GM12878 (cell line): ENCODE measurements at regions of chr7 and their contacts with region 1.

Region 1: DNA sequence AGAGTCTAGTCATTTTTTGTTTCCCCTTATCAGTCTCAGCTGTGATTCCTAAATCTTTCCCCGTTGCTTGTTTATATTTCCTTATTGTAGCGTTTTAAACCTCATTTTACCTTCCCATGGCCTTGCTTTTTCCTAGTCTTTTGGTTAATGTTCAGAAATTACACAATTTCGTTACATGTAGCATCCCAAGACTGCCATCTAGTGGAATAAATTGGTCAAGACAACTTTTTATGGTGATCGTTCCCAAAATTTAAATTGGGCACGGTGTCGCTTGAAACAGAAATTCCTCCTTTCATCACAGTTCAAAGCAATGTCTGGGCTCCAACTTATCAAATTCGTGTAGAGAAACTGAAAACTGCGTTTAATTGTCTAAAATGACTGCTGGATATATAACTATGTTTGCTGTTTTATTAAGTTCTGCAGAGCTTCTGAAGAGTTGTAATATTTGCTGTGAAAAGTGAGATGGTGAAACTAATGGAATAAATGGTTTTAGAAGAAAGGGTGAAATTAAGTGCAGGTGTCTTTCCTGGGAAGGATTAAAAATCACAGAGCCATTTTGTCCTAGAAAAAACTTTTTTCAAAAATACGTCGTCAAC is 370.2 kb downstream of the PHF14 start:
- DNase-seq: no peak
- ATAC-seq: 0 out of 3 replicates have a peak, but pooled peaks have one; percentile 38
- H3K4me3 ChIP-seq: no peak overlapping the region
- H3K27ac ChIP-seq: no peak overlapping the region
- H3K4me1 ChIP-seq: no peaks in the 10 kb centered on the region
- H3K27me3 ChIP-seq: no peaks in the 10 kb centered on the region; a peak in 1 of 4 replicates
- CTCF ChIP-seq: peak; percentile 55 to 71 (median 65); a peak in 5 of 6 replicates
- EP300 ChIP-seq: no peak
- POLR2A ChIP-seq: no peak
- RAD21 ChIP-seq: peak; percentile 81

Region 2: GRCh38 chr7:10412422-10413019 is 931.4 kb before region 1 on chr7:
- CTCF ChIA-PET with region 1: no interaction called
- POLR2A ChIA-PET with region 1: no interaction called
- RAD21 ChIA-PET with region 1: interaction called, 4 read pairs
- SMC1A ChIA-PET with region 1: no interaction called
- in situ Hi-C with region 1: no loop called
- intact Hi-C with region 1: loop called (anchors 2 kb)
- DNase-seq: no peak
- ATAC-seq: peak; percentile 86
- H3K4me3 ChIP-seq: no peak overlapping the region
- H3K27ac ChIP-seq: no peak overlapping the region
- H3K4me1 ChIP-seq: no peaks in the 10 kb centered on the region
- H3K27me3 ChIP-seq: no peaks in the 10 kb centered on the region
- CTCF ChIP-seq: peak; percentile 35 to 63 (median 53)
- EP300 ChIP-seq: no peak
- POLR2A ChIP-seq: no peak
- RAD21 ChIP-seq: peak; percentile 68

Region 3: DNA sequence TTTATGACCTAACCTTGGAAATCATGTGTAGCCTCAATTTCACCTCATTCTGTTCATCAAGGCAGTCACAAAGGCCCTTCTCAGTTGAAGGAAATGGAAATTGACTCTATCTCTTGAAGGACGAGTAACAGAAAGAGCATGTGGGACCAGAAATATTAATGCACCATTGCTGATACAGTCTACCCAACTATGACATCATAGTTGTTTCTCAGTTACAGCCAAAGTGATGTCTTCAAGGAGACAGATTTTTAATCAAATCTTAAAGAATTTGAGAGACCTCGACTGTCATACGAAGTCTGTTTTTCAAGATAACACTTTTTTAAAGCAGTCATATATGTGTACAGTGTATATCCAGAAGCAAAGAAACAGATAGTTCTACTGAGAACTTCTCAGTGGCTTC is 705.9 kb before region 1 on chr7:
- CTCF ChIA-PET with region 1: interaction called, 4 read pairs
- POLR2A ChIA-PET with region 1: no interaction called
- RAD21 ChIA-PET with region 1: no interaction called
- SMC1A ChIA-PET with region 1: interaction called, 3 read pairs
- in situ Hi-C with region 1: no loop called
- intact Hi-C with region 1: loop called (anchors 5 kb)
- DNase-seq: no peak
- ATAC-seq: no peak
- H3K4me3 ChIP-seq: no peak overlapping the region
- H3K27ac ChIP-seq: no peak overlapping the region
- H3K4me1 ChIP-seq: no peaks in the 10 kb centered on the region
- H3K27me3 ChIP-seq: no peaks in the 10 kb centered on the region; a peak in 1 of 4 replicates
- CTCF ChIP-seq: no peak
- EP300 ChIP-seq: no peak
- POLR2A ChIP-seq: no peak
- RAD21 ChIP-seq: no peak

Region 4: DNA sequence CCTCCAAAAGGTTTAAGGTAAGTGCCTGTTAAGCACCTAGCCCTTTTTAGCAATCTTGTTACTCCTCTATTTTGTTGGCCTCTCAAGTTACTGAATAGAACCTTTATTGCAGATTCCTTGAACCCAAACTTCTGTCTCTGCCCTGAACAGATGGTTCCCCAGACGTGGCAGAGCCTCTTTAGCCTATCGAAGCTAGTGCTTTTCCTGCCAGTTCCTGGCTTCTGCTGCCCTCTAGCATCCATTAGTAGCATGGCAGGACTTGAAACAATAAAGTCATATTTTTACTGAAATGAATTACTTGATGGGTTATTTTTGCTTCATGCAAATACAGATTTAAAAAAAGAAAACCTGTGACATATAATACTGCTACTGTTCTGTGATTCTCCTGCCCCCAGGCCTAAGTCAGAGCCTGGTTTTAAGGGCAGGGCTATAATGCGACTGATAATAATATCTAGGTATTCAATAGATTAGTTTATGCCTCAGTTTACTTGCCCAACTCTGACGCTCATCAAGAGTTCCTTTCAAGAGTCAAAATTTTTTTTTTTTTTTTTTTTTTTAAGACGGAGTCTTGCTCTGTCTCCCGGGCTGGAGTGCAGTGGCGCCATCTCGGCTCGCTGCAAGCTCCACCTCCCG is 454.5 kb before region 1 on chr7:
- CTCF ChIA-PET with region 1: no interaction called
- POLR2A ChIA-PET with region 1: no interaction called
- RAD21 ChIA-PET with region 1: no interaction called
- SMC1A ChIA-PET with region 1: no interaction called
- in situ Hi-C with region 1: no loop called
- intact Hi-C with region 1: loop called (anchors 5 kb)
- DNase-seq: no peak
- ATAC-seq: peak; percentile 96
- H3K4me3 ChIP-seq: no peak overlapping the region
- H3K27ac ChIP-seq: no peak overlapping the region
- H3K4me1 ChIP-seq: no peaks in the 10 kb centered on the region
- H3K27me3 ChIP-seq: no peaks in the 10 kb centered on the region
- CTCF ChIP-seq: peak; percentile 78 to 89 (median 86)
- EP300 ChIP-seq: no peak
- POLR2A ChIP-seq: no peak
- RAD21 ChIP-seq: peak; percentile 95

Region 5: GRCh38 chr7:10939911-10940703 is 403.8 kb before region 1 on chr7:
- CTCF ChIA-PET with region 1: no interaction called
- POLR2A ChIA-PET with region 1: no interaction called
- RAD21 ChIA-PET with region 1: no interaction called
- SMC1A ChIA-PET with region 1: no interaction called
- in situ Hi-C with region 1: loop called (anchors 25 kb)
- intact Hi-C with region 1: no loop called
- DNase-seq: peak; percentile 88
- ATAC-seq: peak; percentile 94
- H3K4me3 ChIP-seq: peak overlapping the region; percentile 95
- H3K27ac ChIP-seq: peak overlapping the region; percentile 98
- H3K4me1 ChIP-seq: peaks cover 3% of the 10 kb centered on the region; the same call in 1 of the 2 replicates
- H3K27me3 ChIP-seq: no peaks in the 10 kb centered on the region
- CTCF ChIP-seq: no peak
- EP300 ChIP-seq: peak in 1 of 2 experiments; percentile 45; a peak in 2 of 4 replicates
- POLR2A ChIP-seq: peak; percentile 98
- RAD21 ChIP-seq: no peak; the same call in 1 of the 2 replicates

Region 6: DNA sequence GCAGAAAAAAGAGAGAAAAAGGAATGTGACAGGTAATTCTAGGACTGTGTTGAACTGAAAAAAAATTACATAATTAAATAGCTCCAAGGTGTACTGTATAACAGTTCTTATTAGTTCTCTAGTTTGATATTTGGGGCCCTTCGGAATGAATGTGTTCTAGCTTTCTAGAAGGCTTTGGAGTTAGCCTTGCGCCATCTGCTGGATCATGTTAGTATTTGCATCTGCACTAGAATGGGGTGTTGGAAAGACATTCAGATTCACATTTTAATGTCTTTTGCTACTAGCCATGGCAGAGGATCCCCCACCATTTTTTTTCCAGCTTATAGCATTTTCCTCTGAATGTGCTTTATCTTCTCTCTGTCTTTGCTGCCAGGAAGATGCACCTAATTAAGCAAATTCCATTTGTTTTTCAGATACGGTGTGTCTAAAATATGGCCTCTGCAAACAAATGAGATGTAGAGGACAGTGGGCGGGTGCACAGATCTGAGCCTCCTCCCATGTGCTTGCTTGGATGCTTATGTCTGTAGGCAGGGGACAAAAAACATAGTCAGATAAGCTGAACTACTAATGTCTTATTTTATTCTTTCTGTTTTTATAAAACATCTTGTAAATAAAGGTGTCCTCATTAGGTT is 131.7 kb before region 1 on chr7:
- CTCF ChIA-PET with region 1: interaction called, 7 read pairs
- POLR2A ChIA-PET with region 1: no interaction called
- RAD21 ChIA-PET with region 1: no interaction called
- SMC1A ChIA-PET with region 1: interaction called, 5 read pairs
- in situ Hi-C with region 1: loop called (anchors 10 kb)
- intact Hi-C with region 1: loop called (anchors 1 kb)
- DNase-seq: peak; percentile 12
- ATAC-seq: peak; percentile 92
- H3K4me3 ChIP-seq: no peak overlapping the region
- H3K27ac ChIP-seq: no peak overlapping the region
- H3K4me1 ChIP-seq: no peaks in the 10 kb centered on the region
- H3K27me3 ChIP-seq: peaks cover 0 to 2% of the 10 kb centered on the region in 2 experiments; a peak in 3 of 4 replicates
- CTCF ChIP-seq: peak; percentile 74 to 81 (median 78)
- EP300 ChIP-seq: no peak
- POLR2A ChIP-seq: no peak
- RAD21 ChIP-seq: peak; percentile 92

Region 7: GRCh38 chr7:11355399-11356005 is 11.6 kb after region 1 on chr7:
- CTCF ChIA-PET with region 1: interaction called, 12 read pairs
- POLR2A ChIA-PET with region 1: no interaction called
- RAD21 ChIA-PET with region 1: no interaction called
- SMC1A ChIA-PET with region 1: interaction called, 5 read pairs
- in situ Hi-C with region 1: no loop called
- intact Hi-C with region 1: no loop called
- DNase-seq: no peak
- ATAC-seq: no peak
- H3K4me3 ChIP-seq: no peak overlapping the region
- H3K27ac ChIP-seq: no peak overlapping the region
- H3K4me1 ChIP-seq: no peaks in the 10 kb centered on the region
- H3K27me3 ChIP-seq: peaks cover 0 to 3% of the 10 kb centered on the region in 2 experiments; a peak in 1 of 4 replicates
- CTCF ChIP-seq: no peak
- EP300 ChIP-seq: no peak
- POLR2A ChIP-seq: no peak
- RAD21 ChIP-seq: no peak